ENCODE measurements at regions of chr2 and their contacts with region 1.

Region 1: DNA sequence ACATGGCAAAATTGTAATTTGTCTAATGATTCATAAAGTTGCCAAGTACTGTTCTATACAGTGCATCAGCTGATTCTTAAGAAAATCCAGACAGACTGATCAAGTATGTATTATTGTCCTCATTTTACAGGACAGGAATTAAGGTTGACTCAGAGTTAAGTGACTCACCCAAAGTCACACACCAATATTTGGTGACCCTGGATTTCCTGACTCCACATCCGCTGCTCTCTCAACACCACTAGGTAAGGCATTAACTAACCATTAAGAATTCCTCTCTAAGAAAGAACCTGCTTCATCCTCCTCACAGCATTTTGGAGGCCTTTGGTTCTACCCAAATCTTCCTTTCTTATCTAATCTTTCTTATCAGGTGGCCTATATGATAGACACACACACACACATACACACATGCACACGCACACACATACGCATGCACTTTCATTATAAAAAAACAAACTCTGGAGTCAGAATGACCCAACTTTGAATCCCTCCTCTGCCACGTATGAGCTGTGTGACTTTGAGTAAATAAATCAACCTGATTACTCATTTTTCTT is 150.8 kb downstream of the ANKRD44 start:
- DNase-seq: peak in 1 of 2 donors; percentile 59
- ATAC-seq: peak; percentile 79 to 86 (median 81)
- H3K4me3 ChIP-seq: no peak overlapping the region
- H3K4me3 Mint-ChIP-seq: peak overlapping the region; percentile 75
- H3K27ac ChIP-seq: peak overlapping the region; percentile 29
- H3K27ac Mint-ChIP-seq: peak overlapping the region; percentile 86 to 88
- H3K4me1 ChIP-seq: peaks cover 46% of the 10 kb centered on the region
- H3K4me1 Mint-ChIP-seq: peaks cover 75 to 77% of the 10 kb centered on the region in 2 donors
- H3K27me3 ChIP-seq: no peaks in the 10 kb centered on the region
- H3K27me3 Mint-ChIP-seq: no peaks in the 10 kb centered on the region
- CTCF ChIP-seq: no peak

Region 2: DNA sequence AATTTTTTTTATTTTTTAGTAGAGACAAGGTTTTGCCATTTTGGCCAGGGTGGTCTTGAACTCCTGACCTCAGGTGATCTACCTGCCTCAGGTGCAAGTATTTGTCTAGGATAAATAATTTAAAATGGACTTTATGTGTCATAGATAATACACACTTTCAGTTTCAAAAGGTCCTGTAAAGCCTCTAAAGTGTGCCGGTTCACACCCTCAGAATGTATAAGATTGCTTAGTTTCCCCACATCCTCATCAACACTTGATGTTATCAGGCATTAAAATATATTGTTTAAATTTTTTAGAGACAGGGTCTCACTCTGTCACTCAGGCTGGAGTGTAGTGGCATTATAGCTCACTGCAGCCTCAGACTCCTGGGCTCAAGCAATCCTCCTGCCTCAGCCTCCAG is 19.7 kb before region 1 on chr2:
- intact Hi-C with region 1: loop called (anchors 1 kb)
- DNase-seq: peak in 1 of 2 donors; percentile 41
- ATAC-seq: peak; percentile 72 to 87 (median 80)
- H3K4me3 ChIP-seq: no peak overlapping the region
- H3K4me3 Mint-ChIP-seq: peak overlapping the region; percentile 72
- H3K27ac ChIP-seq: peak overlapping the region; percentile 64
- H3K27ac Mint-ChIP-seq: peak overlapping the region; percentile 72 to 94
- H3K4me1 ChIP-seq: peaks cover 39% of the 10 kb centered on the region
- H3K4me1 Mint-ChIP-seq: peaks cover 80 to 85% of the 10 kb centered on the region in 2 donors
- H3K27me3 ChIP-seq: no peaks in the 10 kb centered on the region
- H3K27me3 Mint-ChIP-seq: no peaks in the 10 kb centered on the region
- CTCF ChIP-seq: no peak

Region 3: GRCh38 chr2:197191177-197191939 is 31.6 kb after region 1 on chr2:
- intact Hi-C with region 1: loop called (anchors 5 kb)
- DNase-seq: peak in 1 of 2 donors; percentile 86
- ATAC-seq: peak; percentile 56 to 71 (median 59)
- H3K4me3 ChIP-seq: no peak overlapping the region
- H3K4me3 Mint-ChIP-seq: peak overlapping the region; percentile 57
- H3K27ac ChIP-seq: peak overlapping the region; percentile 62
- H3K27ac Mint-ChIP-seq: peak overlapping the region; percentile 85 to 91
- H3K4me1 ChIP-seq: peaks cover 14% of the 10 kb centered on the region
- H3K4me1 Mint-ChIP-seq: peaks cover 79 to 83% of the 10 kb centered on the region in 2 donors
- H3K27me3 ChIP-seq: no peaks in the 10 kb centered on the region
- H3K27me3 Mint-ChIP-seq: no peaks in the 10 kb centered on the region
- CTCF ChIP-seq: peak; percentile 89

Region 4: DNA sequence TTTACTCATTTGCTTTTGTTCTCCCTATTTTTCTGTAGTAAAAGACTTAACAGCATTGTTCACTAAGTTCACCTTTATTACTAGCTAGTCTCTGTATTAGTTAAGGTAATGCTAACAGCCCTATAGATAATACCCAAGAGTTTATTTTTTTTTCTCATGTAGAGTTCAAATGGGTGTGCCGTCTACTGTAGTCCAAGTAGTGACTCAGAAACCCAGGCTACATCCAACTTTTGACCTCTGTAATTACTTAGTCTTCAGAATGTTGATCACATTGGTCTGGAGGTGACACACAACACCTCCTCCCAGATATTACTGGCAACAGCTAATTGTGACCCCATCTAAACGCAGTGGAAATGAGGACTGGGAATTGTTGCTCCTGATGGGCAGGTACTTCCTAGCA is 301.3 kb after region 1 on chr2:
- intact Hi-C with region 1: no loop called
- DNase-seq: no peak
- ATAC-seq: no peak
- H3K4me3 ChIP-seq: no peak overlapping the region
- H3K4me3 Mint-ChIP-seq: no peak overlapping the region
- H3K27ac ChIP-seq: no peak overlapping the region
- H3K27ac Mint-ChIP-seq: peak overlapping the region in 1 of 2 donors; percentile 52
- H3K4me1 ChIP-seq: no peaks in the 10 kb centered on the region
- H3K4me1 Mint-ChIP-seq: peaks cover 30 to 42% of the 10 kb centered on the region in 2 donors
- H3K27me3 ChIP-seq: no peaks in the 10 kb centered on the region
- H3K27me3 Mint-ChIP-seq: no peaks in the 10 kb centered on the region
- CTCF ChIP-seq: no peak

Measured in natural killer cell (primary cell).